ENCODE measurements at regions of chr10 and their contacts with region 1.

Region 1: DNA sequence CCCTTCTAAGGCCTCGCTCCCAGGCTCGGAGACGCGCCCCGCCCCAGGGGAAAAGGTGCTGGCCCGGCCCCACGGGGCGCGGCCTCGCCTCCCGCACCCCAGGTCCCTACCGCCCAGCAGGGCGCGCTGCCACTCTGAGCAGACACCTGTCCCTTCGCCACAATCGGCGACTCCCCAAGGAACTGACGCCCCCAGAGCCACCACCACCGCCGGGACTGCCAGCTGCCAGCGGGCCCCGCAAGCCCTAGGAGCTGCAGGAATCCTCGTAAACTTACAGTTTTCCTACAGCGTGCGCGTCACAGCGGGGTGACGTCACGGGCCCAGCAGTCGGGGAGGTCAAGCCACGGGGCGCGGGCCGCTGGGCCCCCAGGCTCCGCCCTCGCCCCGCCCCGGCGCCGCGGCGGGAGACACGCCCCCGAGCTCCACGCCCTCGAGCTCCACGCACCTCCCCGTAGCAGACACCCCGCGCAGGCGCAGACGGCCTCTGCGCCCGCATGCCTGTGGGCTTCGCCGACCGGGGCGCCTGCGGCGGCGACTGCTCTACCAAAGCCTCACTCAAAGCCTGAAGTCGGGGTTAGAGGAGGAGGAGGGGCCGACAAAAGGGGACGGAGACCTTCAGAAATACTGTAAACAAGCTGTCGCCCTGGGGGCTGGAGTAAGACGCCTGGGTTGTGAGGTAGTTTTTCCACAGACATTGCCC is at the start of gene ZNF438:
- DNase-seq: peak; percentile 98
- H3K4me3 ChIP-seq: peak within 1 kb of the TSS; percentile 57 to 77 (median 66)
- H3K27ac ChIP-seq: peak within 1 kb of the TSS; percentile 96 to 100 (median 99)
- H3K4me1 ChIP-seq: peaks cover 2 to 35% (median 21%) of the 10 kb centered on the region in 4 donors
- H3K27me3 ChIP-seq: no peaks in the 10 kb centered on the region
- CTCF ChIP-seq: peak; percentile 38 to 49 (median 48)
- EP300 ChIP-seq: peak; percentile 13 to 69 (median 18)
- POLR2A ChIP-seq: peak; percentile 71 to 86
- total RNA-seq, gene ZNF438: 11.9 to 18.9 (median 15.6) TPM

Region 2: GRCh38 chr10:30736685-30737232 is 294.9 kb before region 1 on chr10:
- intact Hi-C with region 1: loop called (anchors 2 kb)
- DNase-seq: peak; percentile 95
- H3K4me3 ChIP-seq: no peak overlapping the region
- H3K27ac ChIP-seq: peak overlapping the region in 3 of 4 donors; percentile 64 to 86 (median 78)
- H3K4me1 ChIP-seq: peaks cover 0 to 43% (median 34%) of the 10 kb centered on the region in 4 donors
- H3K27me3 ChIP-seq: no peaks in the 10 kb centered on the region
- CTCF ChIP-seq: no peak
- EP300 ChIP-seq: peak; percentile 17 to 96 (median 86)
- POLR2A ChIP-seq: no peak

Region 3: GRCh38 chr10:30803892-30804322 is 227.8 kb before region 1 on chr10:
- intact Hi-C with region 1: loop called (anchors 2 kb)
- DNase-seq: peak; percentile 90
- H3K4me3 ChIP-seq: no peak overlapping the region
- H3K27ac ChIP-seq: peak overlapping the region; percentile 64 to 94 (median 86)
- H3K4me1 ChIP-seq: peaks cover 3 to 50% (median 21%) of the 10 kb centered on the region in 4 donors
- H3K27me3 ChIP-seq: no peaks in the 10 kb centered on the region
- CTCF ChIP-seq: no peak
- EP300 ChIP-seq: peak in 1 of 4 donors; percentile 12
- POLR2A ChIP-seq: no peak

Region 4: DNA sequence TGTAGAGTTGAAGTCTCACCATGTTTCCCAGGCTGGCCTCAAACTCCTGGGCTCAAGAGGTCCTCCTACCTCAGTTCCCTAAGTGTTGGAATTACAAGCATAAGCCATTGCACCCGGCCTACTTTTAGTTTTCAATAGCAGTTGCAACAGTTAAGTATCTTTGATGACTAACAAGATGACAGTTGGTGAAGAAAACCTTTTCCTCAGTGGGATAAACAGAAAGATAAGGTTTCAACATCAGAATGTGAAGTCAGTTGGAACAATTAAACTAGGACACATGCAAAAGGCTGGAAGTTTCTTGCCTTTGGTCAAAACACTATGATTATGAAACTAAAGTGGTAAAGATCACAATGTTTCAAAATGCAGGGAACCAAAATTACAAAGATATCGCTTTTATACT is 169.2 kb before region 1 on chr10:
- intact Hi-C with region 1: loop called (anchors 5 kb)
- DNase-seq: no peak
- H3K4me3 ChIP-seq: no peak overlapping the region
- H3K27ac ChIP-seq: peak overlapping the region; percentile 42 to 60 (median 52)
- H3K4me1 ChIP-seq: peaks cover 0 to 43% (median 13%) of the 10 kb centered on the region in 4 donors
- H3K27me3 ChIP-seq: no peaks in the 10 kb centered on the region
- CTCF ChIP-seq: no peak
- EP300 ChIP-seq: no peak
- POLR2A ChIP-seq: no peak

Region 5: GRCh38 chr10:31318854-31319601 is 287.3 kb after region 1 on chr10 and contains the start of gene ZEB1:
- intact Hi-C with region 1: loop called (anchors 2 kb)
- DNase-seq: peak; percentile 96
- H3K4me3 ChIP-seq: peak within 1 kb of the TSS; percentile 78 to 98 (median 88)
- H3K27ac ChIP-seq: peak within 1 kb of the TSS; percentile 97 to 99 (median 98)
- H3K4me1 ChIP-seq: peaks cover 0 to 31% (median 26%) of the 10 kb centered on the region in 4 donors
- H3K27me3 ChIP-seq: no peaks in the 10 kb centered on the region
- CTCF ChIP-seq: peak; percentile 30 to 61 (median 45)
- EP300 ChIP-seq: peak in 1 of 4 donors; percentile 7
- POLR2A ChIP-seq: peak in 1 of 2 donors; percentile 14
- total RNA-seq, gene ZEB1: 215 to 255 (median 251) TPM

Region 6: DNA sequence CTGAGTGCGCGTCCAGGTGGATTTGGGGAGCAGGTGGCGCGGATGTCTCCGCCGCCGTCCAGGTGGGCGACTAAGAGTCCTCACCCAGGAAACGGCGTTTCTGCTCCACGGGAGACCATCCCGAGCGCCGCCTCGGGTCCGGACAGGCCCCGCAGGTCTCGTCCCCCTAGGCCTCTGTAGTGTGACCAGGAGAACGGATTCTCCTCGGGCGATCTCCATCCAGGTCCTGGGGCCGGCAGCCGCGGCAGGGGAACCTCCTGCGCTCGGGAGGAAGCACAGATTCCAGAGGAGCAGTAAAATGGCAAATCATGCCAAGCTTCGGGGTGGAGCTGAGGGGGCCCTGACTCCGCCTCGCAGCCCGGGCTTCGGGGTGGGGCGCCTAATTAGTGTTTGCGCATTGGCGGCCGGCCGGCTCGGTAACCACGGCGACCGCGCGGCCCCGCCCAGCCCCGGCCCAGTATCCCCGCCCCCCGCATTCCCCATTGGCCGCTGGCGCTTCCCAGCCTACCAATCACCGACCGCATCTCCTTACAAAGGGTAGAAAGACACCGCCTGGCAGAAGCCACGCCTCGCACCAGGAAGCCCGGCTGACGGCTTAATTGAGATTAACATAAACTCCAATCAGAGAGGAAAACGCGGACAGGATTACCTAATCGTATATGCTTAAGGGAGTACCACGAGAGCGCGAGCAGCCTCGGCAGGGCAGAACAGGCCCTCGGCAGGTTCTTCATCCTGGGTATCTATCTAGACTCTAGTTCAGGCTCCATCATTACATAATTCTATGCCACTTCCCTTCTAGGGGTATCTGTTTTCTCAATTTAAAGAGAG is 728.3 kb after region 1 on chr10:
- intact Hi-C with region 1: loop called (anchors 5 kb)
- DNase-seq: peak; percentile 99
- H3K4me3 ChIP-seq: peak overlapping the region; percentile 56 to 96 (median 80)
- H3K27ac ChIP-seq: peak overlapping the region; percentile 93 to 99 (median 94)
- H3K4me1 ChIP-seq: peaks cover 0 to 49% (median 36%) of the 10 kb centered on the region in 4 donors
- H3K27me3 ChIP-seq: no peaks in the 10 kb centered on the region
- CTCF ChIP-seq: no peak
- EP300 ChIP-seq: no peak
- POLR2A ChIP-seq: peak; percentile 91 to 92

Measured in sigmoid colon (tissue), 7 donors.